SK-N-SH (cell line): ENCODE measurements at regions of chr11 and their contacts with region 1.

Region 1: DNA sequence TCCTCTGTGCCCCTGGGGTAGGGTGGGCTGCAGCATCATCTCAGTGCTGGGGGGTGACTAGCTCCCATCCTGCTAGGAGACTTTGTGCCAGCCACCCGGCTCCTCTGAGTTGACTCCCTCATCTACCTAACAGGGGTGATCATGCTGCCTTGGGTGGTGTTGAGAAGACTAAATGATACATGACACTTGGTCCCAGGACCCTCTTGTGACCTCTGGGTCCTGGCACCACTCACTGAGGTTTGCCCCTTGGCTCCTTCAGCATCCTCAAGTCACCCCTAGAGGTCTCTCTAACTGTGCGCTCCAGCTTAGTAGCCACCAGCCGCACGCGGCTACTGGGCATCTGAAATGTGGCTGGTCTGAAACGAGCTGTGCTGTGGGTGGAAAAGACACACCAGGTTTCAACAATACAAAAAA is 72.1 kb downstream of the LRRC32 start:
- DNase-seq: peak; percentile 72
- H3K4me3 ChIP-seq: no peak overlapping the region
- H3K27ac ChIP-seq: no peak overlapping the region
- H3K4me1 ChIP-seq: peaks cover 4 to 19% of the 10 kb centered on the region in 2 experiments; a peak in 2 of 4 replicates
- H3K27me3 ChIP-seq: no peaks in the 10 kb centered on the region
- CTCF ChIP-seq: peak; percentile 57
- EP300 ChIP-seq: no peak
- RAD21 ChIP-seq: peak; percentile 80

Region 2: DNA sequence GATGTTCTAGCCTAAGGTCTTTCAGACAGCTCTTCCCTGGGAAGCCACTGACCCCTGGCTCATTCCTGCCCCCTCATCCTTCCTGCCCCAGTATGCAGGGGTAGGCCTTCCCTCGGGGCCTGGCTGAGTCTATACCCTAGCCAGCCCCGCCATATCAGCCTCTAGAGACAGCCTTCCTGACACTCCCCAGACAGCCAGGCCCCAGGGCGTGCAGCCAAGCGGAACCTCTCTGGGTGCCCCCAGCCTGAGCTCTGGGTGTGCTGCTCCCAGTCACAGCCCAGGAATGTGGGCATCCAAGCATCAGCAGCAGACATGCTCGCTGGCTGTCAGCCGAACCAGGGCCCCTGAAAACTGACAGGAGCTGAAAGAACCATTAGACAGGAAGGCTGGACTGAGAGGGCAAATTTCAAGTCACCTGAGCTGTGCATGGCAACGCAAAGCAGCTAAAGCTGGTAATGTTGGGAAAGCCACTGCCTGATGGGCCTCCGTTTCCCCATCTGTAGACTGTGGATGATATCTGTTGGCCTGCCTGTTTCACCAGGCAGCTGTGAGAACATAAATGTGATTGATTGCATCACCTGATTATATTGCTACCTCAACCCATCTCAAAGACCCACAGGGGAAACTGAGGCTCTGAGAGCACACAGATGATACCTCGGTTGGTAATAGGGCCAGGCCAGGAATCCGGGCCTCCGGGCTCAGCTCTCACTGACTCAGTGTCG is 21.1 kb before region 1 on chr11:
- CTCF ChIA-PET with region 1: interaction called, 15 read pairs
- POLR2A ChIA-PET with region 1: no interaction called
- DNase-seq: peak; percentile 88
- H3K4me3 ChIP-seq: no peak overlapping the region
- H3K27ac ChIP-seq: peak overlapping the region; percentile 58 to 86
- H3K4me1 ChIP-seq: peaks cover 12 to 28% of the 10 kb centered on the region in 2 experiments
- H3K27me3 ChIP-seq: no peaks in the 10 kb centered on the region
- CTCF ChIP-seq: no peak
- EP300 ChIP-seq: peak; percentile 88 to 90
- RAD21 ChIP-seq: peak; percentile 14; the same call in 1 of the 2 replicates

Region 3: DNA sequence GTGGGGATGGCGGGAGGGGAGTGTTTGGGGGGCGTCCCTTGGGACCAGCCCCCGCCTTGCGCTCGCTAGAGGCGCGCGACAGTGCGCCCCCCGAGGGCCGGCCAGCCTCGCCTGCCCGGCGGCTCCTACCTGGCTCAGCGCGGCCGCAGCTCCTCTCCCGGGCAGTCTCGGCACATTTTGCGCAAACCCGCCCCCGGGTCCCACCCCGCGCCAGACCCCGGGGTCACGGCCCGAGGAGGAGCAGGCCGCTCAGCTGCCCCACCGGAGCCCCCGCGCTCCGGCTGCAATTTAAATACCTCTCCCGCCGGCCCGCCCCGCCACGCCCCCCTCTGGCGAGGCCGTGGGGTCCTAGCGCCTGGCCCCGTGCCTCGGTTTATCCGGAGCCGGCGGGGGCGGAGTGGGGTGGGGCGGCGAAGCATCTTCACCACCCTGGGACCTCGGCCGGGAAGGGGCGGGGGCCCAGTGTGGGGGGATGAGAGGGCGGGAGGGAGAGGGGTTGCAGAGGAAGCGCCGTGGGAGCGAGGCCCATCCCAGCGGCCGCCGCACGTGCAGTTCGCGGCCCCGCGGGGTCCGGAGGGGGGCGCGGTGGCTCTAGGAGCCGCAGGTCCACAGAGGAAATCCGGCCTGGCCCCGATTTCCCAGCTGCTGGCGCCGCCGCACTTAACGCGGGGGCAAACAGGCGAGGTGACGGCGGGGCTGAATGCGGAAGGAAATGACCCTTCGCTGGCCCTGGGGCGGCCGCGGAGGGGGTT is 72.2 kb after region 1 on chr11 and contains the start of gene LRRC32:
- CTCF ChIA-PET with region 1: interaction called, 11 read pairs
- POLR2A ChIA-PET with region 1: no interaction called
- DNase-seq: peak; percentile 87
- H3K4me3 ChIP-seq: peak within 1 kb of the TSS; percentile 50 to 60
- H3K27ac ChIP-seq: no peak within 1 kb of the TSS
- H3K4me1 ChIP-seq: peaks cover 0 to 8% of the 10 kb centered on the region in 2 experiments; a peak in 1 of 4 replicates
- H3K27me3 ChIP-seq: no peaks in the 10 kb centered on the region
- CTCF ChIP-seq: 0 out of 2 replicates have a peak, but pooled peaks have one; percentile 2
- EP300 ChIP-seq: no peak
- RAD21 ChIP-seq: no peak
- polyA plus RNA-seq, gene LRRC32: 0.19 and 0.43 TPM in 2 replicates